ENCODE measurements at regions of chr1 and their contacts with region 1.

Region 1: DNA sequence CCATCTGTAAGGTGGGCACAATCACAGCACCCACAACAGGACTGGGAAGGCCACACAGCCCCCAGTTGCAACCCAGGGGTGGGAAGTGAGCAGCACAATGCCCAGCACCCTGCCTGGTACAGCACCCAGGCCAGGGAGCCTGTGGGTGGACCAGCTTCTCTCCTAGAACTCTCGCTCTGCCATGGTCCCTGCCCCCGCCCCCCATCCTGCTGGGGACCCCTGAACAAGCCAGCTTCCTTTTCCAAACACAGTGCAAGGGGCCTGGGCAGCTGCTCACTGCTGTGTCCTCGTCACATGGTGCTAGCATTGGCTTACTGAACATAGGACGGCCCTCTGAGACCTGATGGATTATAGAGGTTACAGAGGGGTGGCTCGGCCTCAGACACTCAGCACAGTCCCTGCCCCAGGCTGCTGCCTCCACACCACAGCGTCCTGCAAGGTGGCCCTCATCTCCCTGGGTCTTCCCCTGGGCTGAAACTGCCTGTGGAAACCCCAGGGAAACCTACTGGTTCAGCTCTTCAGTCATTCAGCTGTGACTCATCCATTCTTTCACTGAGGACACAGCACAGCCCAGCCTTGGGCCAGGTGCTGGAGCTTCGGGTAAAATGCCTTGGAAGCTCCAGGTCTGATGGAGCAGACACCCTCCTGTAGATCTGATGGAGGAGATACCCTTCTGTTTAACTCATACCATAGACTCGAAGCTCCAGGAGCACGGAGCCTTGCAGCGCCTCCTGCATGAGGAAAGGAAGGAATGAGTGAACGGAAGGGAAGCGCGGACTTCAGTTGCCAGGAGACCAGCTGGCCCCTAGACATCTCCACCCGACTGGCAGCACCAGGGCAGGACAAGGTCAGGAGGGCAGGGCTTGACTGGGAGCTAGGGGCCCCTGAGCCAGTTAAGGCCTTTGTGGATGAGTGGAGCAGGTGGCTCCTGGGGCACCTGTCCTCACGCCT is 8.1 kb upstream of the PRDM16 start:
- DNase-seq: no peak
- ATAC-seq: peak; percentile 11
- H3K4me3 ChIP-seq: no peak overlapping the region
- H3K27ac ChIP-seq: no peak overlapping the region
- H3K4me1 ChIP-seq: peaks cover 9% of the 10 kb centered on the region
- H3K27me3 ChIP-seq: no peaks in the 10 kb centered on the region
- CTCF ChIP-seq: no peak
- POLR2A ChIP-seq: no peak

Region 2: DNA sequence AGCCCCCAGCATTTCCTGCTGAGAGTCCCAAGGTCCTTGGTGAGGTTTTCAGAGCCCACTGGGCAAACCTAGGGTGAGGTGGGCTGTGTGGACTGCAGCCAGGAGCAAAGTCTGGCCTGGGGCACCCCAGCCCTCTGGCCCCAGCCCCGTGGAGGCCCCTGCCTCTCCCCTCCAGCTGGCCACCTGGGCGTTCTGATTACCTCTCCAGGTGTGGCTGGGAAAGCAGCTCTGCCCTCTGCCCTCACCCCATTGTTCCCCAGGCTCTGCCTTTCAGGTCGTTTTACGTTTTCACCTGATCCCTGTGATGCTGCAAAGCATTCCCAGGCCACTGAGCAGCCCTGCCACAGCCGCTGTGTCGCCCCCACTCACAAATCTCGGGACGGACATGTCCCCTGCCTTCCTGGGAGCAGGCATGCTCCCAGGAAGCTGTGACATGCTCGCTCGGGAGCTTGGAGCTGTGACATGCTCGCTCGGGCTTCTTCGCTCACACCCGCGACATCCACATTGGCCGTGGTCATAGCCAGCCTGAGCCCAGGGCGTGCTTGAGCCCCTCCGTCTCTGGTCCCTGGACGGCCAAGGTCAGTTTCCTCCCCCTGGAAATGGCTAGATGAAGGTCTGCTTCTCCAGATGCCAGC is 224.3 kb after region 1 on chr1:
- intact Hi-C with region 1: loop called (anchors 5 kb)
- DNase-seq: no peak
- ATAC-seq: no peak
- H3K4me3 ChIP-seq: no peak overlapping the region
- H3K27ac ChIP-seq: no peak overlapping the region
- H3K4me1 ChIP-seq: peaks cover 15% of the 10 kb centered on the region
- H3K27me3 ChIP-seq: no peaks in the 10 kb centered on the region
- CTCF ChIP-seq: no peak
- POLR2A ChIP-seq: no peak

Region 3: DNA sequence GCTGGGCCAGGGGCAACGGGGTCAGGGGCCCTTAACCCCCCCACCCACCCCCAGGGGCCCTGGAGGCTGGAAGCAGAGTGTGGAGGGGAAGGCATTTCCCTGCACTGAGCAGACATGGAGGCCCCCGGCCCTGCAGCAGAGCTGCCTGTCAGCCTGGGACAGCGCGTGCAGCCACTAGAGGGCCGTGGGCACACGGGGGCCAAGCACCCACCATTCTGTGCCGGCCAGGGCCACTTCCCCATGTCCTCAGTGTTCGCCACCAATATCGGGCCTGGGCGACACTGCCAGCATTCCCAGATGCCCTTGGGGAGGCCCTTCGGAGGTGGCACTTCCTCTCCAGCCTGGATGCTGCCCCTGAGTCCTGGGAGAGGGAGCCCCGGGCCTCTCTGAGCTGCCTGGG is 370.4 kb after region 1 on chr1:
- intact Hi-C with region 1: loop called (anchors 5 kb)
- DNase-seq: no peak
- ATAC-seq: no peak
- H3K4me3 ChIP-seq: no peak overlapping the region
- H3K27ac ChIP-seq: no peak overlapping the region
- H3K4me1 ChIP-seq: no peaks in the 10 kb centered on the region
- H3K27me3 ChIP-seq: no peaks in the 10 kb centered on the region
- CTCF ChIP-seq: no peak
- POLR2A ChIP-seq: no peak